Activated naive CD8-positive, alpha-beta T cell treated with anti-CD3 and anti-CD28 coated beads, Interleukin-2, amount 10 ng/mL, durations not matched to agents 7 days and 5 days (primary cell): ENCODE measurements at regions of chr2 and their contacts with region 1.

Region 1: DNA sequence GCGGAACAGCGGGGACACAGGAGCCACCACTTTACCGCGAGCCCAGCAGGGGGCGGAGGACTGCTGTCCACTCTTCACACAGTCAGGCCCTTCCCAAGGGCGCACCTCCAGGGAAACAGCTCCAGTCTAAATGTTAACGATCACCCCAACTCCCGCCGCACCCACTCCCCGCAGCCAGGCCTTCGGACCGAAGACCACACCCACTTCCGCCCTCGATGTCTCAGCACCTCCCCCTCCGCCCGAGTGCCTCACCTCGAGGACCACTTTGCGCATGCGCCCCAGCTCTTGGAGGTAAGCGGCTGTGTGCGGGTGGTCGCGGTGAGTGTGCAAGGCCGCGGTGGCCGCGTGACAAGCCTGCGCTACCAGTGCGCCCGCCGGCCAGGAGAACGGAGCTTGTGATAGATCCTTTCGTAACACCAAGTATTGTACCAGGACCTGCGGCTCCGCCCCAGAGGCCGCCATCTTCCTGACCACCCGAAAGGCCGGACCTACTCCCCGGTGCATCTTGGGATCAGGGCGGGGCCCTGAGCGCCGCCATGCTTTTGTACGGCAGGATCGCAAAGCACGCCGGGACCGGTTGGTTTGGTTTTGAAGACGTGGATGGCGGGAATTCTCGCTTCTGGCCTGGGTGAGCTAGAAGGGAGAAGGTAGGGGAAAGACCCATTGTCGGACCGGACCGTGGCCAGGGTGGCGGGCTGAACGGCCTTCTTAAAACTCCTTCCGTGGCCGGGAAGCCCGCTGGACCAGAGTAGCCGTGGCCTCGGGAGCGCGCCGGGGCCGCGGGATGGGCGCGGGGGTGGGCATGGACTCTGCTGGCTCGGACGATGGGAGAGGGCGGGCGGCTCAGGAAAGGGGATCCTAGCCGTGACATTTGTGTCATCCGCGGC is at the starts of genes CENPO and PTRHD1:
- DNase-seq: peak; percentile 94
- ATAC-seq: peak; percentile 97
- H3K4me3 Mint-ChIP-seq: peak within 1 kb of the TSS; percentile 96
- H3K27ac Mint-ChIP-seq: peak within 1 kb of the TSS; percentile 100
- H3K4me1 Mint-ChIP-seq: peaks cover 33% of the 10 kb centered on the region
- H3K27me3 Mint-ChIP-seq: peaks cover 1% of the 10 kb centered on the region
- total RNA-seq, gene CENPO: 38.8 to 39.0 TPM
- total RNA-seq, gene PTRHD1: 17.3 to 19.8 TPM

Region 2: DNA sequence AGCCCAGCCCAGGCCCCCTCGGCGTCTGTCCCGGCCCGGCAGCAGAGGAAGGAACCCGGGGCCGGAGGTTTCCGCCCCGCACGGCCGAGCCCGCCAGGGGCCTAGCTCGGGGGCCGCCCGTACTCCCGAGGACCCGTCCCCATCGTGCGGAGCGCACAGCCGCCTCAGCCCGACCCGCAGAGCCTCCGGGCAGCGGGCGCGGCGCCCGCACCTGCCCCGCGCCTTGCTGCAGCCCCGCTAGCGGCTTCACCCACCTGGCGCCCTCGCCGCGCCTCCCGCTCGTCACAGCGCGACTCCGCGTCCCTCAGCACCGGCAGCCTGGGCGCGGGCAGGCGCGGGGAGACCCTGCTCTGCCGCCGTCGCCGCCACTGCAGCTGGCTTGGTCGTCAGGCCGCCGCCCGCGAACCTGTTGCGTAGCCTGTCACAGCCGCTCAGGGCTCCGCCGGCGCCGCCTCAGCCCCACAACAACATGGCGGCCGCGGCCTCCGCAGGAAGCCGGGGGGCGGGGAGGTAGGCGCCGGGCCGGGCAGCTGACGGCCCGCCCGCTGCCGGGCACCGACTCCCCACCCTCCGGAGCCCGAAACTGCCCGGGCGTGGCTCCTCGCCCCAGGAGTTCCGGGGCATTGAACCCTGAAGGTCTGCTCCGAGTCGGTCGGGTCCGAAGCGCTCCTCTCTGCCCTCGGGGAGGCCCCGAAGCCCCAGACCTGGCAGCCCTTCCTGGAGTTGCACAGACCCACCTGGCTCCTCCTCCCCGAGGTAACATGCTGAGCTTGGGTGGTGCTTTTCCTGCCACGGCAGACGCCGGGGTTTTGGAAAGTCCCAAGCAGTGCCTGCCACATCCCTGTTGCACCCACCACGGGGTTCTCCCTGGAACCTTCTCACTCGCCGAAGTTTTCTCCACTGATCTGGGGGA is 432.8 kb before region 1 on chr2 and contains the start of gene ITSN2:
- POLR2A ChIA-PET with region 1: interaction called, 14 read pairs
- DNase-seq: peak; percentile 91
- ATAC-seq: peak; percentile 89
- H3K4me3 Mint-ChIP-seq: peak within 1 kb of the TSS; percentile 87
- H3K27ac Mint-ChIP-seq: peak within 1 kb of the TSS; percentile 89
- H3K4me1 Mint-ChIP-seq: peaks cover 21% of the 10 kb centered on the region
- H3K27me3 Mint-ChIP-seq: no peaks in the 10 kb centered on the region
- total RNA-seq, gene ITSN2: 86.8 to 91.3 TPM

Region 3: DNA sequence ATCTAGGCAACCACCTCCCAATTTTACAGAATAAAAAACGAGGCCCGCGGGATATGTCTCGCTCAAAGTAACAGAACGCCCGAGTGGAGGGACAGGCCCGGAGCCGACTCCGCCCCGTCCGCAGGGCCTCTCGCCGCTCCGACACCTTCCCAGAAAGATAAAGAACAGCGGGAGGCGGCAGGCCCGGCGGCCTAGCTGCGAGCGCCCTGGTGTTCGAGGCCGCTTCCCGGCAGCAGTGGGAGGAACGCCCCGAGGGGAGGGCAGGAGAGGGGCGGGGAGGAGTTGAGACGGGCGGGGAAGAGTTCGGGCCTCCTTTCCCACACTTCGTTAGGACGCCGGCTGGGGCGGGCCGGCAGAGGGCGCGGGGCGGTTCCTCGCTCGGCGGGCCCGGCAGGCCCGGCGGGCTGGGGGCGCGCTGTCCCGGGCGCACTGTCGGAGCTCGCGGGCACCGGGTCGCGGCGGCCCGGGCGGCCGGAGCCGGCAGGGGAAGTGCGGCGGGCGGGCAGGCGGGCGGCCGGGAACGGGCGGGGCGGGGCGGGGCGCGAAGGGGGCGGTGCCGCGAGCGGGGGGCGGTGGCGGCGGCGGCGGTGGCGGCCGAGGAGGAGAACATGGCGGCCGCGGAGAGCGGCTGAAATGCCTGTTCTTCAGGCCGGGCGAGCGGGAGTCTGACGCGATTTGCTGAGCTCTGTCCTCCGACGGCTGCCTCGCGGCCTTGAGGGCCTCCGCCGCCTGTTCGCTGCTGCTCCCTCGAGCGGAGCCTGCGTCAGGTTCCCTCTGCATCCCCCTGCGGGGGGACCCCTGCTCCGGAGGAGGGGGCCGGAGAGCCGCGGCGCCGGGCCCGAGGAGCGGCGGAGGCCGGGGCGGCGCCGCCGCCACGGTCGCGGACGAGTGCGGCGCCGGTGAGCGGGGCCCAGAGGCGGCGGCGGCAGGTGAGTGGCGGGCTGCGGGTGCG is 302.2 kb before region 1 on chr2 and contains the start of gene NCOA1:
- POLR2A ChIA-PET with region 1: interaction called, 12 read pairs
- DNase-seq: peak; percentile 89
- ATAC-seq: peak; percentile 90
- H3K4me3 Mint-ChIP-seq: peak within 1 kb of the TSS; percentile 90
- H3K27ac Mint-ChIP-seq: peak within 1 kb of the TSS; percentile 88
- H3K4me1 Mint-ChIP-seq: peaks cover 33% of the 10 kb centered on the region
- H3K27me3 Mint-ChIP-seq: no peaks in the 10 kb centered on the region
- total RNA-seq, gene NCOA1: 23.6 to 24.7 TPM

Region 4: GRCh38 chr2:24806662-24807037 is 13.5 kb after region 1 on chr2:
- POLR2A ChIA-PET with region 1: no interaction called
- DNase-seq: no peak
- ATAC-seq: no peak
- H3K4me3 Mint-ChIP-seq: no peak overlapping the region
- H3K27ac Mint-ChIP-seq: no peak overlapping the region
- H3K4me1 Mint-ChIP-seq: peaks cover 12% of the 10 kb centered on the region
- H3K27me3 Mint-ChIP-seq: no peaks in the 10 kb centered on the region